K562 (cell line): ENCODE measurements at regions of chr2 and their contacts with region 1.

Region 1: DNA sequence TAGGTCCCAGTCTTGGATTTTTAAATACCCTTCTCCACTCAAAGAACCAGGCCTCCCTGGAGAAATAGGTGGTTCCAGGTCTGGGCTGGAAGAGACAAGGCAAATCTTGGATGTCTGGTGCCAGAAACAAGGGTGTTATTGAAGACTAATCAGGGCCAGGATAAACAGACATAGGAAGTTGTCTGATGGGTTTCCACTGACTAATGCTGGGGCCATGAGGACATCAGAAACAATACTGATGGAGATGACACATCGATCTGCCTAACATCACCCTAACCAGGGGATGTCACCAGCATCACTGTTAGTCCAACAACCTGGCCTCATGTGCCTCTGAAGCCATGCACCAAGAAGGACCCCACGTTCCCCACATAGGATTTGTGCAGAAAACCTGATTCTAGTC is 42.5 kb upstream of the GLI2 start:
- DNase-seq: no peak
- ATAC-seq: no peak
- H3K4me3 ChIP-seq: no peak overlapping the region
- H3K27ac ChIP-seq: no peak overlapping the region
- H3K4me1 ChIP-seq: no peaks in the 10 kb centered on the region
- H3K27me3 ChIP-seq: peaks cover 17 to 51% of the 10 kb centered on the region in 2 experiments
- CTCF ChIP-seq: no peak
- EP300 ChIP-seq: no peak
- POLR2A ChIP-seq: no peak
- RAD21 ChIP-seq: no peak

Region 2: DNA sequence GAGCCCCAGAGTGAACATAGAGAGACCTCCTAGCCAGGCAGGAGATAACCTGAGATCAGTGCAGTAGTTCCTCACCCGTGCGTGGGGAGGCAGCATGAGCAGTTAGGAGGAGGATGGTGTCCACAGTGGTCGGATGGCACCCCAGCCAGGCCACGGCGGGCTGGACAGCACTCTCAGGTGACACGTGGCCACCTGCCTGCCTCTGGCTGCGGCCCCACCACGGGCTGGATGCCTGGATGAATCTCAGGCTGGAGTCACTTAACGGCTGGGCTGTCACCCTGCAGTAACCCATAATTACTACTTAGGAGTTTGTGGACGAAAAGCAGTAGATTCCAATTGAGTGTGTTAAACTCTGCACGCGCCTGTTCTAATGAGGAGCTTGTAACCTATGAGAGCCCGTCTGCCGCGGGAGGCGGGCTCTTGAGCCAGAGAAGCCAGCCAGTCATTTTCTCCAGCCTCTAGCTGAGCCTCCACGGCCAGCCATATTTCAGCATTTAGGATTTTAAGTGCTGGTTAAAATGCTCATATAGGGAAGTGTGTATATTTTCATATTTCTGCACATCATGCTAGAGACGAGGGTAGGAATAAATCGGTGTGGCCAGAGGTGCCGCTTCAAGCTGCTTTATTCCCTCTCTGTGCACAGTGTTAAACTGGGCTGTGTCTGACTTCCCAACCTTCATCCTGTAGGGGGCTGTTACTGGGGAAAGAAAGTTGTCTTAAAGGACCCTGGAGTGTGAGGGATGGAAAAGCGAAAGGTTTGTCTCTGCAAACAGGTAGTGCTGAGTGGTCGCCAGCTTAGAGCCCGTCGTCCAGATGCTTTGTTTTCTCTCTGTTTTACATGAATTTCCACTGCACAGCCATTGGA is 186.5 kb after region 1 on chr2:
- CTCF ChIA-PET with region 1: interaction called, 6 read pairs
- POLR2A ChIA-PET with region 1: no interaction called
- in situ Hi-C with region 1: no loop called
- intact Hi-C with region 1: loop called (anchors 1 kb)
- DNase-seq: no peak
- ATAC-seq: peak; percentile 64
- H3K4me3 ChIP-seq: no peak overlapping the region
- H3K27ac ChIP-seq: no peak overlapping the region
- H3K4me1 ChIP-seq: peaks cover 0 to 9% of the 10 kb centered on the region in 2 experiments; a peak in 2 of 5 replicates
- H3K27me3 ChIP-seq: peaks cover 53 to 81% of the 10 kb centered on the region in 2 experiments
- CTCF ChIP-seq: peak; percentile 20 to 59 (median 50); a peak in 4 of 6 replicates
- EP300 ChIP-seq: no peak
- POLR2A ChIP-seq: no peak
- RAD21 ChIP-seq: peak; percentile 28 to 37; a peak in 3 of 4 replicates

Region 3: DNA sequence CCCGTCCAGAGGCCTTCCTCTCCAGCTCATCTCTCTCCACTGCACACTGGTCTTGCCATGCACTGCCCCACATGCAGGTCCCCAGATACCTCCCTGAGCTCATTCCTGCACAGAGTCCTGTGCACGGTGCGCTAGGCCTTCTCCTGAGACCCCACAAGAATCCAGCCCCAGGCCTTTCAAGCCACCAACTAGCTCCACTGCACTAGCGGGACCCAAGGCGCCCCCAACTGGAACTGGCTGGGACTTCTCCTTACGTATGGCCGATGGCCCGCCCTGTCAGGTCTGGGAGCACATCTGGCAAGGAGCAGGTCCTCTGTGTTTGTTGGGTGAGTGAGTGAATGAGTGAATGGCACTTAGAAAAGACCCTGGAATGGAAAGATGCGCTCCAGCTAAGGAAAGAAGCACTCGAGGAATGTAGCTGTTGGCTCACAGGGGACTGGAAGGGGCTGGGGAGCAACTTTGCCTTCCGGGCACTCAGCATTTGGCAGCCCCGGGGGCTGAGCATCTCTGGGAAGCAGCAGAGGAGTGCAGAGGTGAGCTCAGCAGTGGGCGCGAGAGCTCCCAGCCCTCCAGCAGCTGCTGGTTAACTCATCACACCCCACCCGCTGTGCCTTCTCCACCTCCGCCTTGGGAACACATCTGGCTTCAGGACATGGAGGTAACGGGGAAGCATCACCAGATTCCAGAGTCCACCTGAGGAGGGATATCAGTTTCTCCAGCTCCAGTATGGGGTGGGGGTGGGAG is 265.7 kb after region 1 on chr2:
- CTCF ChIA-PET with region 1: no interaction called
- POLR2A ChIA-PET with region 1: interaction called, 3 read pairs
- in situ Hi-C with region 1: no loop called
- intact Hi-C with region 1: loop called (anchors 1 kb)
- DNase-seq: peak; percentile 40 to 62 (median 49)
- ATAC-seq: peak; percentile 82
- H3K4me3 ChIP-seq: no peak overlapping the region
- H3K27ac ChIP-seq: no peak overlapping the region
- H3K4me1 ChIP-seq: no peaks in the 10 kb centered on the region; a peak in 1 of 5 replicates
- H3K27me3 ChIP-seq: peaks cover 27 to 89% of the 10 kb centered on the region in 2 experiments; a peak in 4 of 5 replicates
- CTCF ChIP-seq: peak; percentile 52 to 64 (median 64)
- EP300 ChIP-seq: no peak
- POLR2A ChIP-seq: no peak
- RAD21 ChIP-seq: peak; percentile 22 to 50; a peak in 2 of 4 replicates

Region 4: DNA sequence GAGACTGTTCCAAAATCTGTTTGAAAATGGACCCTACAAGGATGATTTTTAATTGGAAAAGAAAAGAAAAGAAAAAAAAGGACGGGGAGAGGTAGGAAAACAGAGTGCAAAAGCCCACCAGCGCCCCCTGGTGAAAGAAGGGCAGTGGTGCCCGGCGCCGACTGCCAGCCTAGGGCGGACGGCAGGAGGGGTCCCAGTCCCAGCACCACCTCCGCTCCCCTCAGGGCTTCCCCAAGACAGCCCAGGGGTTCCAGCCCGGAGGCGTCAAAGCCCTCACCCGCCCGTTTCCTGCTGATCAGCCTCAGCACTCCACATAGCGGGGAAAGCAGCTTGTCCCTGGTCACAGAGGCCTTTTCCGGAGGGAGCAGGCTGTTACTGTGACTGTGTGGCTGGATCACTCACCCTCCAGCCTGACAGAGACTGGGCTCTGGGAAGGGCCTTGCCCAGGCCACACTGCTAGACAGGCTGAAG is 377.9 kb after region 1 on chr2:
- CTCF ChIA-PET with region 1: interaction called, 57 read pairs
- POLR2A ChIA-PET with region 1: interaction called, 6 read pairs
- in situ Hi-C with region 1: loop called (anchors 5 kb)
- intact Hi-C with region 1: loop called (anchors 1 kb)
- DNase-seq: peak; percentile 62 to 81 (median 80)
- ATAC-seq: peak; percentile 64
- H3K4me3 ChIP-seq: no peak overlapping the region
- H3K27ac ChIP-seq: no peak overlapping the region
- H3K4me1 ChIP-seq: peaks cover 0 to 17% of the 10 kb centered on the region in 2 experiments; a peak in 2 of 5 replicates
- H3K27me3 ChIP-seq: peaks cover 0 to 43% of the 10 kb centered on the region in 2 experiments; a peak in 4 of 5 replicates
- CTCF ChIP-seq: peak; percentile 83 to 88 (median 87)
- EP300 ChIP-seq: no peak
- POLR2A ChIP-seq: no peak
- RAD21 ChIP-seq: peak; percentile 84 to 86